ENCODE measurements at regions of chr4 and their contacts with region 1.

Region 1: DNA sequence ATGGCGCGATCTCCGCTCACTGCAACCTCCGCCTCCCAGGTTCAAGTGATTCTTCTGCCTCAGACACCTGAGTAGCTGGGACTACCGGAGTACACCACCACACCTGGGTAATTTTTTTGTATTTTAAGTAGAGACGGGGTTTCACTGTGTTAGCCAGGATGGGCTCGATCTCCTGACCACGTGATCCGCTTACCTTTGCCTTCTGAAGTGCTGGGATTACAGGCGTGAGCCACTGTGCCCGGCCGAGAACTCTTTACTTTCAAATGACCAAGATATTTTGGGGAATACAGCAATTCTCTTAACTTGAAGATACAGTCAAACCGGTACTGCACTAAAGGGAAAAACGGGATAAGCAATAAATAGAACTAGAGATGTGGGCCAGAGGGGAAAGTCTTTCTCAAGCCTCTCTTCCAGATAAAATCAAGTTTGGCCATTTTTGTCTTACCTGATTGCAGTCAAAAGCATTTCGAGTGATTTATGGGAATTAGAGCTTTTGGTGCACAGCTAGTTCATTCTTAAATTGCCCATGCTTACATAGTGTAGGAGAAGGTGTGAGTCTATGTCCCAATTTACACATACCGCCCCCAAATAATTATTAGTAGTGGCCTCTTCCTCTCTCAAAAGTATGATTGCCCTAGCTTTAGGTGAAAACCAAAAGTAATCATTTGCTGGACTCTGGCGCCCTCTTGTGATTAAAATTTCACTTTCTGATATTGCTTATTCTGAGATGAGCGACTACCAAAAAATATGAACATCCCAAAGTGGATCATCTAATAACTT is 53.2 kb upstream of the ABCG2 start:
- DNase-seq: peak; percentile 52
- ATAC-seq: peak; percentile 64
- H3K4me3 ChIP-seq: peak overlapping the region in 2 of 3 experiments; percentile 22 to 30; a peak in 3 of 6 replicates
- H3K27ac ChIP-seq: no peak overlapping the region
- H3K4me1 ChIP-seq: peaks cover 26% of the 10 kb centered on the region
- H3K27me3 ChIP-seq: no peaks in the 10 kb centered on the region; a peak in 1 of 5 replicates
- CTCF ChIP-seq: peak; percentile 77
- EP300 ChIP-seq: no peak
- POLR2A ChIP-seq: no peak
- RAD21 ChIP-seq: peak; percentile 88

Region 2: GRCh38 chr4:87498446-87498900 is 713.2 kb before region 1 on chr4:
- CTCF ChIA-PET with region 1: no interaction called
- POLR2A ChIA-PET with region 1: no interaction called
- in situ Hi-C with region 1: no loop called
- intact Hi-C with region 1: no loop called
- DNase-seq: no peak
- ATAC-seq: no peak; the same call in 2 of the 3 replicates
- H3K4me3 ChIP-seq: no peak overlapping the region
- H3K27ac ChIP-seq: no peak overlapping the region
- H3K4me1 ChIP-seq: peaks cover 17% of the 10 kb centered on the region
- H3K27me3 ChIP-seq: no peaks in the 10 kb centered on the region
- CTCF ChIP-seq: no peak
- EP300 ChIP-seq: no peak
- POLR2A ChIP-seq: no peak
- RAD21 ChIP-seq: no peak

Region 3: GRCh38 chr4:87679449-87680169 is 532.1 kb before region 1 on chr4:
- CTCF ChIA-PET with region 1: interaction called, 3 read pairs
- POLR2A ChIA-PET with region 1: no interaction called
- in situ Hi-C with region 1: no loop called
- intact Hi-C with region 1: loop called (anchors 5 kb)
- DNase-seq: peak; percentile 48
- ATAC-seq: peak; percentile 63
- H3K4me3 ChIP-seq: no peak overlapping the region
- H3K27ac ChIP-seq: no peak overlapping the region
- H3K4me1 ChIP-seq: no peaks in the 10 kb centered on the region
- H3K27me3 ChIP-seq: peaks cover 0 to 7% of the 10 kb centered on the region in 2 experiments; a peak in 2 of 5 replicates
- CTCF ChIP-seq: peak; percentile 78
- EP300 ChIP-seq: no peak
- POLR2A ChIP-seq: no peak
- RAD21 ChIP-seq: peak; percentile 48; the same call in 1 of the 2 replicates

Region 4: DNA sequence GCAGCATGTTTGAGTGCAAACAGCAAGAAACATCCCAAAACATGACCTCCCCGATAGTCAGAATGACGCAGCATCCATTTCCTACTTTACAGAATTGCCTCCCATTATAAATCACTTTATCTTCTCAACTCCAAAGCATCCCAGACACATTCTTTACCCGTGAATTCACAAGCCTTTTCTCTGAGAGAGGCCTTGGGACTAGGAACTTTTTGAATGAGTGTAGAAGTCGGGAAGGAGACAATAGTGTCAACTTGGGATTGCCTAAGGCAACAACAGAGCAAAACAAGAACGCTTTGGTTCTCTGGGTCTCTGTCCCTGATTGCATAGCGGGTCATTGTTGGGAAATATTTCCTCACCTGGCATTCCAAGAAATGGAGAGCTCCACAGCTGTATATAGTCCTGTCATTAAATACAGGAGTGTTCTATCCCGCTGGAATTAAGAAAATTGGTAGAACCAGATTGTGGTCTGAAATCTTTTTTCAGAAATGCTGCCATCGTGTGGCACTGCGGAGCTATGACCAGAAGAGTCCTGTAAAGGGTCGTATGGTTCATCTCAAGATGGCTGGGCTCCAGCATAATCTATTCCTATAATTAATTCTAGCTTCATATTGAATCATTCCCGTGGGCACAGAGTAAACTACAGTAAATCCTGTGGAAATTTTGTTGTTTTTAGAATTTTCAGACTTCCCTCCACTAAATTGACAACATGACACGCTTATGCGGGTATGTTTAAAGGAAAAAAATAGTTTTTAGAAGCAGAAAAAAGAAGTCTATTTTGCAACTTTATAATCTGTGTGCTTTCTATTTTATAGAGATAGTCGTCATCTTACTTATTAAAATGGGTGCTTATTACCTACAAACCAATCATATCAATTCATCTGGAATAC is 238.1 kb before region 1 on chr4:
- CTCF ChIA-PET with region 1: no interaction called
- POLR2A ChIA-PET with region 1: no interaction called
- in situ Hi-C with region 1: no loop called
- intact Hi-C with region 1: loop called (anchors 5 kb)
- DNase-seq: peak; percentile 63
- ATAC-seq: peak; percentile 77
- H3K4me3 ChIP-seq: peak overlapping the region in 2 of 3 experiments; percentile 24 to 26; a peak in 2 of 6 replicates
- H3K27ac ChIP-seq: no peak overlapping the region
- H3K4me1 ChIP-seq: peaks cover 64% of the 10 kb centered on the region
- H3K27me3 ChIP-seq: no peaks in the 10 kb centered on the region
- CTCF ChIP-seq: peak; percentile 79
- EP300 ChIP-seq: no peak
- POLR2A ChIP-seq: no peak
- RAD21 ChIP-seq: peak; percentile 73

Region 5: GRCh38 chr4:88054901-88055300 is 156.8 kb before region 1 on chr4:
- CTCF ChIA-PET with region 1: interaction called, 43 read pairs
- POLR2A ChIA-PET with region 1: no interaction called
- in situ Hi-C with region 1: loop called (anchors 5 kb)
- intact Hi-C with region 1: loop called (anchors 1 kb)
- DNase-seq: peak; percentile 70
- ATAC-seq: peak; percentile 100
- H3K4me3 ChIP-seq: no peak overlapping the region
- H3K27ac ChIP-seq: no peak overlapping the region
- H3K4me1 ChIP-seq: peaks cover 6% of the 10 kb centered on the region
- H3K27me3 ChIP-seq: no peaks in the 10 kb centered on the region
- CTCF ChIP-seq: peak; percentile 93
- EP300 ChIP-seq: no peak
- POLR2A ChIP-seq: no peak
- RAD21 ChIP-seq: peak; percentile 95

Region 6: DNA sequence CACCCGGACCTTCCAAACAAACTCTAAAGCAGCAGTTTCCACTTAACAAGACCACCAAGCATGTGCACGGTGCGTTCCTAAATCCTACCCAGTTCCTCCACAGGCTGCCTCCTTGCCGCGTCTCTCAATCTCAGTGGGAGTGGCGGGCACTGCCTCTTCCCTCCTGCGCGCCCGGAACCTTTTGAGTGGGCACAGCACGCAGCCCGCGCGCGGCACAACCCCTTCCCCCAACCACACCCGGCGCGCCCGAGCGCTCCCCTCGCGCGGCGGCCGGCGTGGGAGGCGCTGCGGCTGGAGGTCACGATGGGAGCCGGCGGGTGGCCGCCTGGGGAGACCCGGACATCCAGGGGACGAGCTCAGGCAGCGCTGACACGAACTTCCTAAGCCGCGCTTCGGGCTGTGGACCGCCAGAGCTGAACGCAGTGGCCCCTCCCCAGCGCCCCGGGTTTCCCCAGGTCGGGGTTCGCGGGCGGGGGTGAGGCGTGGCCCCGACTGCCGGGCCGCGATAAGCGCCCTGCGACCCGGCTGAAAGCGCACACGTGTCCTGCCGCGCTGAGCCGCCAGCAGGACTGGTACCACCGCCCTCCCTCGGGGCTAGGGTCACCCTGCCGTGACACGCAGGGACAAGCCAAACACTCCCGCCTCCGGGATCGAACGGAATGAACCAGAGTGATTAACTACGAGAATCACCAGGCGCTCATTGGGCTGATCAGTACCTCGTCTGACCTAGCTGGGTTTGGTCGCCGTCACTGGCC is 53.0 kb before region 1 on chr4 and contains the start of gene ABCG2:
- CTCF ChIA-PET with region 1: no interaction called
- POLR2A ChIA-PET with region 1: no interaction called
- in situ Hi-C with region 1: no loop called
- intact Hi-C with region 1: loop called (anchors 1 kb)
- DNase-seq: peak; percentile 44
- ATAC-seq: peak; percentile 88
- H3K4me3 ChIP-seq: peak within 1 kb of the TSS; percentile 49 to 82 (median 75)
- H3K27ac ChIP-seq: peak within 1 kb of the TSS; percentile 67
- H3K4me1 ChIP-seq: peaks cover 36% of the 10 kb centered on the region
- H3K27me3 ChIP-seq: no peaks in the 10 kb centered on the region
- CTCF ChIP-seq: no peak
- EP300 ChIP-seq: no peak
- POLR2A ChIP-seq: peak; percentile 42 to 45; a peak in 2 of 4 replicates
- RAD21 ChIP-seq: peak; percentile 14; the same call in 1 of the 2 replicates
- total RNA-seq, gene ABCG2: 13.2 and 15.7 TPM in 2 replicates

Region 7: GRCh38 chr4:88456757-88457306 is 245.2 kb after region 1 on chr4 and contains the start of gene HERC5:
- CTCF ChIA-PET with region 1: no interaction called
- POLR2A ChIA-PET with region 1: no interaction called
- in situ Hi-C with region 1: no loop called
- intact Hi-C with region 1: loop called (anchors 5 kb)
- DNase-seq: peak; percentile 74
- ATAC-seq: peak; percentile 96
- H3K4me3 ChIP-seq: peak within 1 kb of the TSS in 2 of 3 experiments; percentile 33 to 52; a peak in 3 of 6 replicates
- H3K27ac ChIP-seq: no peak within 1 kb of the TSS
- H3K4me1 ChIP-seq: peaks cover 7% of the 10 kb centered on the region; the same call in 1 of the 2 replicates
- H3K27me3 ChIP-seq: peaks cover 0 to 24% of the 10 kb centered on the region in 2 experiments; a peak in 3 of 5 replicates
- CTCF ChIP-seq: peak; percentile 88
- EP300 ChIP-seq: no peak
- POLR2A ChIP-seq: no peak
- RAD21 ChIP-seq: peak; percentile 64; the same call in 1 of the 2 replicates
- total RNA-seq, gene HERC5: 0.29 and 0.33 TPM in 2 replicates